ENCODE measurements at regions of chr13 and their contacts with region 1.

Region 1: DNA sequence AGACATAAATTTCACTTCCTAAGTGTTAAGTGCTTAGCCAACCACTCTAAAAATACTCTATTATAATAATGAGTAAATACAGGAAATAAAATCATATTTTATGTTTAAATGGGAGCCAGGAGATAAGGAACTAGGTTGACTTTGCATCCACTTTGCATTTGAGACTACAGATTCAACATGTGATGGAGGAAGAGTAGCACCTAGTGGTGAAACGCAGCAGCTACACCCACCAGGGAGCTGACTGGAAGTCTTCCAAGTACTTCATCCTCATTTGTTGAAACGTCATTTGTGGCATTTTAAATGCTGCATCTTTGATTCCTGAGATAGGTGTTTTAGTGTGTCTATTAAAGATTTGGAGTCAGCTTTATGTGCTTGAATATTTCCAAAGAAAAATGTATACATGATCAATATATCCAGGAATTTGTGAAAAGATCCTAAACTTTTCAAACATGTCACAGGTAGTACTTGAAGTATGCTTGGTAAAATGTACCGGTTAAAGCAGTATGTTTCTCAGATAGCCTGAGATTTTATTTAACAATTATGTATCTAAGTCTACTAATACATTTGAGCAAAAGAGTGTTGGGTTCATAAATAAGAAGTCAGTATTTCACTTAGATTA is 17.4 kb upstream of the KCTD12 start:
- DNase-seq: peak in 1 of 2 donors; percentile 43
- ATAC-seq: peak; percentile 83 to 84
- H3K4me3 ChIP-seq: no peak overlapping the region
- H3K27ac ChIP-seq: no peak overlapping the region
- H3K4me1 ChIP-seq: no peaks in the 10 kb centered on the region
- H3K27me3 ChIP-seq: no peaks in the 10 kb centered on the region
- CTCF ChIP-seq: peak; percentile 78 to 96 (median 85)
- POLR2A ChIP-seq: no peak

Region 2: DNA sequence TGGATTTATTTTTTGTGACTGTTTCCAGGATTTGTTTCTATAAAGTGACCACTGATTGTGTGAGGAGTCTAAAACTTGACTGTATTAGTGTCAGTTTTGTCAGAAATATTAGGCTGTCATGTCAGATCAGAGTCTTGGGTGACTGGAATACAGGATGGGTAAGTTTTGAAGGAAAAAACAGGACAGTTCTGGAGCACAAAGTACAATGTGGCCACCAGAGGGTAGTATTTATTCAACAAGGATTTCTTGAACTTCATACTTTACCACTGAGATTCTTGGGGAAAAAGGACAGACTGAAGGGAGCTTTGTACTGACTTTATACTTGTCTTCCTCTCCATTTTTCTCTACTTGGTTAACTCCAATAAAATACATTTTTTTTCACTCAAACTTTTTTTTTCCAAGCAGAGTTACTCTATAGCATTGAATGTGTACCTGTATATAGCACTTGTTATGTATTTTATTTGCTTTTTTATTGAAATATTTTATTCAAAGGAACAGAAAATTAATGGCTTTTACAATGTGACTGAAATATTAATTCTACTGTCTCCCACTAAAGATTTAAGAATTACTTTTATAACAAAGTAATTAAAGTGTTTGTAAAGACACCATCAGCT is 1216.4 kb before region 1 on chr13:
- in situ Hi-C with region 1: loop called in 2 of 4 experiments (anchors 25 kb)
- intact Hi-C with region 1: loop called (anchors 10 kb)
- DNase-seq: no peak
- ATAC-seq: peak in 1 of 2 donors; percentile 23
- H3K4me3 ChIP-seq: no peak overlapping the region
- H3K27ac ChIP-seq: no peak overlapping the region
- H3K4me1 ChIP-seq: no peaks in the 10 kb centered on the region
- H3K27me3 ChIP-seq: no peaks in the 10 kb centered on the region
- CTCF ChIP-seq: peak in 3 of 5 experiments; percentile 15 to 46 (median 34)
- POLR2A ChIP-seq: no peak

Region 3: DNA sequence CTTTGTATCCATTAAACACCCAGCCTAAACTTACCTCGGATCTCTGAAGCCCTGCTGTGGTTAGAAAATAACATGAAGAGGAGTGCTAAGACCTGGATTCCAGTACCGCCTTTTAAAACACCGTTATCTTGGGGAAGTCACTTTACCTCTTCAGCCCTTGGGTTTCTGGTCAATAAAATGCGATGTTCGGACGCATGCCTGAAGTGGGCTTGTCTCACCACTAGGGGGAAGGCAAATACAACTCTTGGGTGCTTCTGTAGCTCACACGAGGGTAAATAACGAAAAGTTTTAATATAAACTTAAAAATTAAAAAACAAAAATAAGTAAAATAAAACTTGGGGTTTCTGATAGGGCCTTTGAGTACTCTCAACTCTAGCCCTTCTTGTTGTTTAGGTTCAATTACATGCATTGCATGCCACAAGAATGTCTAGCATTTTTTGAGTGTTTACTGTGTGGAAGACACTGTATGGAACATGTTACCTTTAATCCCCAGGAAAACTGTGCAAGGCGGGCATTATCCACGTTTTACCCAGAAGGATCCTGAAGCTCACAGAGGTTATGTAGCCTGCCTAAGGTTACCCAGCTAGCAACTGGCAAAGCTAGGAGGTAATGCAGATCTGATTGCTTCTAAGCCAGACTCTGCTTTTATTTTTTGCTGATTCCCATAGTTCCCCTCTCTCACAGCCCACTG is 1027.1 kb before region 1 on chr13:
- in situ Hi-C with region 1: loop called (anchors 5 to 10 kb)
- intact Hi-C with region 1: loop called (anchors 2 kb)
- DNase-seq: peak; percentile 11 to 36
- ATAC-seq: peak; percentile 78 to 85
- H3K4me3 ChIP-seq: no peak overlapping the region
- H3K27ac ChIP-seq: no peak overlapping the region
- H3K4me1 ChIP-seq: no peaks in the 10 kb centered on the region
- H3K27me3 ChIP-seq: no peaks in the 10 kb centered on the region
- CTCF ChIP-seq: peak; percentile 78 to 88 (median 80)
- POLR2A ChIP-seq: no peak

Region 4: GRCh38 chr13:76667551-76667950 is 236.1 kb before region 1 on chr13:
- in situ Hi-C with region 1: loop called in 1 of 4 experiments (anchors 10 kb)
- intact Hi-C with region 1: no loop called
- DNase-seq: no peak
- ATAC-seq: peak; percentile 60 to 66
- H3K4me3 ChIP-seq: no peak overlapping the region
- H3K27ac ChIP-seq: no peak overlapping the region
- H3K4me1 ChIP-seq: no peaks in the 10 kb centered on the region
- H3K27me3 ChIP-seq: no peaks in the 10 kb centered on the region
- CTCF ChIP-seq: peak in 2 of 5 experiments; percentile 21 to 22
- POLR2A ChIP-seq: no peak

Region 5: DNA sequence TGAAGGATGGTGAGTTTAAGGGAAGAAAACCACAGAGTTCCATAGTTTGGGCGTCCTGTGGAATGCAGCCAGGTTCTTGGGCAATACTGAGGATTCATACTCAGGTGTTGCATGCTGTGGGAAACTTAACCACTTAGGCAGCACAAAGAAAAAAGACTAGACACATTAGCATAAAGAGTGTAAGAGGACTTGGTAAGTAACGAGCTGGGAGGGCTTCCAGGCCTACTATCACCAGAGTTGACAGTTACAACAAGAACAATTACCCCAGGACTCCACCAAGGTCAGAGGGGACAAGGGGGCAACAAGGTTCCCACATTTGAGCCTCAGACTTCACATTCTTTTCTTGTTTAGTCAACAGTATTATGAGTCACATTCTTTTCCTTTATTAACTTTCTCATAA is 50.7 kb before region 1 on chr13:
- in situ Hi-C with region 1: no loop called
- intact Hi-C with region 1: no loop called
- DNase-seq: no peak
- ATAC-seq: no peak
- H3K4me3 ChIP-seq: no peak overlapping the region
- H3K27ac ChIP-seq: no peak overlapping the region
- H3K4me1 ChIP-seq: no peaks in the 10 kb centered on the region
- H3K27me3 ChIP-seq: no peaks in the 10 kb centered on the region
- CTCF ChIP-seq: no peak
- POLR2A ChIP-seq: no peak